Mucosa of descending colon (tissue), 3 donors: ENCODE measurements at regions of chr10 and their contacts with region 1.

Region 1: GRCh38 chr10:103416436-103417147 is 20.2 kb downstream of the PDCD11 start:
- DNase-seq: peak in 2 of 3 donors; percentile 31 to 90
- ATAC-seq: peak; percentile 65
- H3K4me3 ChIP-seq: no peak overlapping the region
- H3K4me1 ChIP-seq: no peaks in the 10 kb centered on the region
- CTCF ChIP-seq: no peak

Region 2: DNA sequence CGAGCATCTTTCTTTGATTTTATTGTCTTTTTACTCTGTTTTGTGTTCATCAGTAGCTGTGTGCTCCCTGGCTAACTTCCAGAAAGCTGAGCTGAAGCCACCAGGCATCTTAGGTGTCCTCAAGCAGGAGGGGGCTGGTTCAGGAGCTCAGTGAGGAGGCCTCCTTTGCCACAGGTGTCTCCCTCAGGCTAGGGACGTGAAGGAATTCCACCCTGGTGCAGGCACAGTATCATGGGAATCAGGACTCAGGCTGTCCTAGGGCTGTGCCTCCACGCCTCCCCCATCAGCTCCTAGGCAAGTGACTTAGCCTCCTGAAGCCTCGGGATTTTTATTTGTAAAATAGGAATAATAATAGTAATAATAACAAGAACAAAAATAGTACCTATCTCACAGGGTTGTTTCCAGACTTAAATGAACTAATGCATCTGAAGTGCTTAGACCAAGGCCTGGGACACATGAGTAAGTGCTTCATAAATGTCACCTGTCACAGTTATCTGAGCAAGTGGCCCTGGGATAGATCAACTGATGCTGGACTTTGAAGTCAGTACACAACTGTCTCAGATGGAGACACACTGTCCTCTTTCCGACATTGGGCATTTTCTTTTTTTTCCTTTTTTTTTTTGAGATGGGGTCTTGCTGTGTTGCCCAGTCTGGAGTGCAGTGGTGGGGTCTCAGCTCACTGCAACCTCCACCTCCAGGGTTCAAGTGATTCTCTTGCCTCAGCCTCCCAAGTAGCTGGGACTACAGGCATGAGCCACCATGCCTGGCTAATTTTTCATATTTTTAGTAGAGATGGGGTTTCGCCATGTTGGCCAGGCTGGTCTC is 70.0 kb after region 1 on chr10:
- intact Hi-C with region 1: loop called in 1 of 2 experiments (anchors 5 kb)
- DNase-seq: peak in 1 of 3 donors; percentile 7
- ATAC-seq: no peak
- H3K4me3 ChIP-seq: no peak overlapping the region
- H3K4me1 ChIP-seq: peaks cover 6% of the 10 kb centered on the region
- CTCF ChIP-seq: no peak